ENCODE measurements at regions of chr13 and their contacts with region 1.

Region 1: GRCh38 chr13:24020375-24020830 is 123.1 kb upstream of the C1QTNF9B start:
- DNase-seq: peak in 1 of 2 donors; percentile 32
- H3K4me3 ChIP-seq: no peak overlapping the region
- H3K27ac ChIP-seq: no peak overlapping the region
- H3K4me1 ChIP-seq: no peaks in the 10 kb centered on the region
- H3K27me3 ChIP-seq: no peaks in the 10 kb centered on the region
- CTCF ChIP-seq: peak; percentile 43 to 73 (median 65)
- POLR2A ChIP-seq: no peak

Region 2: DNA sequence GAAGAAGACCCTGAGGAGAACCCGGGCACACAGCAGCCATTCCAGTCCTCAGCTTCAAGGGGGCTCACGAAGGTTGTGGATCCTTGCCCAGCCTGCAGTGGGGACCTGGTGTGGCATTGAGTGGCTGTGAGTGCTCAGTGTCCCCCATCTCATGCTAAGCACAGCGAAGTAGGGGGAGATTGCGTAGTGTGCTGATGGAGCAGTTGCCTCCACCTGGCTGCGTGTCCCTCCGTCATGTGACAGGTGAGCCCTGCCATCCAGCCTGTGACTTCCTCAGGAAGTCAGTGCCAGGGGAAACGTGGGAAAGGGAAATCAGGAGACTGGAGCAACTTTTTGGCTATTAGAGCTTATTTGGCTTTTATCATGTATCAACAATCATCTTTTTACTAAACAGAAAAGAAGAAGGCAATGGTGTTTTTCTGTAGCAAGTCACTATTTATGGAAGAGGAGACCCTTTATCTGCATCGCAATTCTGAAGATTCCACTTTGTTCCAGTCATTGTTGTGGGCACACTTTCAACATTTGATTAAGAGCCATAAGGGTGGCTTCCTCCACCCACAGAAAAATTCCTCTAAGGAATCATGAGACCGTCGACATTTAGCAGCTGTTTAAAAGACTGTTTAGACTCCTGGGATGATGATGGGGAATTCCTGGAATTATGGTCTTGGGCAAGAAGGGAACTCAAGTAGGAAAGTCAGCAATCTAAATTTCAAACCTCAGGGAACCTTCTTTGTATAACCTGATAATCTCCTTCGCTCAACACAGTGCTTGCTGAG is 13.3 kb after region 1 on chr13:
- intact Hi-C with region 1: loop called (anchors 2 kb)
- DNase-seq: no peak
- H3K4me3 ChIP-seq: no peak overlapping the region
- H3K27ac ChIP-seq: peak overlapping the region; percentile 40 to 75
- H3K4me1 ChIP-seq: peaks cover 0 to 6% of the 10 kb centered on the region in 2 donors
- H3K27me3 ChIP-seq: no peaks in the 10 kb centered on the region
- CTCF ChIP-seq: no peak
- POLR2A ChIP-seq: no peak

Region 3: GRCh38 chr13:24217601-24218281 is 197.3 kb after region 1 on chr13:
- intact Hi-C with region 1: loop called (anchors 10 kb)
- DNase-seq: no peak
- H3K4me3 ChIP-seq: no peak overlapping the region
- H3K27ac ChIP-seq: peak overlapping the region; percentile 69
- H3K4me1 ChIP-seq: no peaks in the 10 kb centered on the region
- H3K27me3 ChIP-seq: no peaks in the 10 kb centered on the region
- CTCF ChIP-seq: no peak
- POLR2A ChIP-seq: no peak

Measured in breast epithelium (tissue), 4 donors.